Stomach (tissue), 19 donors: ENCODE measurements at regions of chr18 and their contacts with region 1.

Region 1: DNA sequence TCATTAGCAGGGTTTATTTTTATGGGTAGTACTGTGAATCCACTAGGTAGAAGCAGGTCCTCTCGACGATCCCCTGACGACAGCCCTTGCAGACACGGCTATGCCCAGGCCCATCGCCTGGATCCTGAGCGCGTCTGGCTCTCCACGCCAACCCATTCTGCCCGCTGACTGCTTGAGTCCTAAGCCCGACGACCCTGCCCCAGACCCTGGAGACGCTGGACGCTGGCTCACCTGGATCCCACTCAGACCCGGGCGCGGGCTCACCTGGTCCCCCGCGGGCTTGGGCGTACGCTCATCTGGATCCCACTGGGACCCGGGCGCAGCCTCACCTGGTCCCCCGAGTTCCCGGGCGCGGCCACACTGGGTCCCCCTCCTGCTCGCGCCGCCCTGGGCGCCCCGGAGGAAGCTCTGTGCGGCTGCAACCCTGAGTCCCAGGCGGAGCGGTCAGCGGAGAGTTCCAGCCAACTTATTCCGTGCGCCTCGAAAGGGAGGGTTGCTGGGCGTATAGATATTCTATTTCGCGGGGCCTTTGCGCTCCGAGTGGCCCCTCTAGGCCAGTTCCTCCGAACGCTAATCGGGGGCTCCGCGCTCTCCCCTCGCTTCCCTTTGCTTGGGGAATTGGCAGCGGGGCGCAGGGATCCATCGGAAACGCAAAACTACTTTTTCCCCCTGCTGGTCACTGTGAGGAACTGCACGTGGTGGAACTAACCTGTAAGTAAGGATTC is 22.4 kb upstream of the RMP24 start:
- DNase-seq: peak; percentile 55 to 87
- H3K4me3 ChIP-seq: peak overlapping the region; percentile 48 to 68 (median 56)
- H3K27ac ChIP-seq: peak overlapping the region in 1 of 5 donors; percentile 36
- H3K4me1 ChIP-seq: peaks cover 0 to 9% (median 8%) of the 10 kb centered on the region in 4 donors
- H3K27me3 ChIP-seq: peaks cover 0 to 8% (median 0%) of the 10 kb centered on the region in 3 donors
- CTCF ChIP-seq: peak in 6 of 7 experiments; percentile 68 to 97 (median 92)
- EP300 ChIP-seq: no peak
- POLR2A ChIP-seq: no peak

Region 2: GRCh38 chr18:35386600-35387351 is 563.3 kb before region 1 on chr18:
- intact Hi-C with region 1: loop called (anchors 10 kb)
- DNase-seq: peak; percentile 72 to 93
- H3K4me3 ChIP-seq: no peak overlapping the region
- H3K27ac ChIP-seq: no peak overlapping the region
- H3K4me1 ChIP-seq: no peaks in the 10 kb centered on the region
- H3K27me3 ChIP-seq: peaks cover 0 to 5% (median 0%) of the 10 kb centered on the region in 3 donors
- CTCF ChIP-seq: peak in 5 of 7 experiments; percentile 48 to 79 (median 77)
- EP300 ChIP-seq: no peak
- POLR2A ChIP-seq: no peak

Region 3: DNA sequence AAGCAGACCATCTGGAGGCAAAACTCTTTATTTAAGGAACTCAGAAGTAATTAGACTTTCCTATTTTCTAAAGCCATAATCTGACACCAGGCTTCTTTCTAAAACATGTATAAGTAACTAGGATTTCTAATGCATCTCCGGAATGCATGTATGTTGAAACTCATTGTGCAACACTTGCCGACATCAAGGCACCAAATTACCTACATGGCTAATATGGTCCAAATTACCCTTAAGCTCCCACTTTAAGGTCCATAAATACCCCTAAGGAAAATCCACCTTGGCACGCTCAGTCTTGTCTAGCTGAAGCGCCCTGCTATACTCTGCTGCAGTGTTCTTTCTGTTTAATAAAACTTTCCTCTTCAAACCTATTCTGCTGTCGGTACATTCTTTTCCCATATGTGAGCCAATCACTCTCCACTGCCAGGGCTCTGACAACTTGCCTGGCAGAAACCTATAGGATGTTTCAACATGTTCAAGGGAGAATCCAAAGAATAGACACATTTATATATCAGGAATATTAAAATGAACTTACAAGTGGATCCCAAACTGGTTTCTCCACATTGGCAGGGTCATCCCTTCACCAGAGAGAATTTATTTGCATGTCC is 196.7 kb before region 1 on chr18:
- intact Hi-C with region 1: loop called (anchors 5 kb)
- DNase-seq: no peak
- H3K4me3 ChIP-seq: no peak overlapping the region
- H3K27ac ChIP-seq: no peak overlapping the region
- H3K4me1 ChIP-seq: no peaks in the 10 kb centered on the region
- H3K27me3 ChIP-seq: peaks cover 0 to 13% (median 0%) of the 10 kb centered on the region in 3 donors
- CTCF ChIP-seq: no peak
- EP300 ChIP-seq: no peak
- POLR2A ChIP-seq: no peak

Region 4: DNA sequence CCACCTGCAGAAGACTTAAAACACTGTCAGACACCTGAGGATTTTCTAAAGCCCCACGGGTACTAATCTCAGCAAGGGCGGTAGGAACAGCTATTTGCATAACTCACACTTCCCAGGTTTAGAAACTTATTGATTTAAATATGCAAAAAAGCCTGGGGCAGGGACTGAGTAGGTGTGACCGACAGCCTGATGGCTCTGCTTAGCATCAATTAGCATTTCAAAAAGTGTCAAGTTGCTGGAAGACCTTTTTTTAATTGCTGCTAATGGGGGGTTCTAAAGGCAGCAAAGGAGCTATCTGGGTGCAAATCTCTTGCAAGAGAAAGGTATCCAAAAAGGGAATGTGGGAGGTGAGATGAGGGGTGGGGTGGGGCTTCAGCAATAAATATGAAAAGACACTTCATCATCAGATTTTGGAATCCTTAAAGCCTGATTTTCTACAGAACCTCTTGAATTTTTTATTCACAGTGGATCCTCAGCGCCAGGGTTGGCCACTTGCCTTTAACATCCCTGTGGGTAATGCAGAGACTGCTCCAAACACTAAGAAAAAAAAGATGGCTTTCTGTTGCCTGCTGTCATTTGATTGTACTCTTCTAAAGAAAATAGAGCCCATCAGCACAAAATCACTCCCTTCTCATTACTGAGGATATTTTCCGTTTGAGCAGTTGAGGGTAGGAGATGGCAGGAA is 98.6 kb before region 1 on chr18:
- intact Hi-C with region 1: no loop called
- DNase-seq: no peak
- H3K4me3 ChIP-seq: no peak overlapping the region
- H3K27ac ChIP-seq: no peak overlapping the region
- H3K4me1 ChIP-seq: no peaks in the 10 kb centered on the region
- H3K27me3 ChIP-seq: peaks cover 0 to 9% (median 0%) of the 10 kb centered on the region in 3 donors
- CTCF ChIP-seq: no peak
- EP300 ChIP-seq: no peak
- POLR2A ChIP-seq: no peak

Region 5: DNA sequence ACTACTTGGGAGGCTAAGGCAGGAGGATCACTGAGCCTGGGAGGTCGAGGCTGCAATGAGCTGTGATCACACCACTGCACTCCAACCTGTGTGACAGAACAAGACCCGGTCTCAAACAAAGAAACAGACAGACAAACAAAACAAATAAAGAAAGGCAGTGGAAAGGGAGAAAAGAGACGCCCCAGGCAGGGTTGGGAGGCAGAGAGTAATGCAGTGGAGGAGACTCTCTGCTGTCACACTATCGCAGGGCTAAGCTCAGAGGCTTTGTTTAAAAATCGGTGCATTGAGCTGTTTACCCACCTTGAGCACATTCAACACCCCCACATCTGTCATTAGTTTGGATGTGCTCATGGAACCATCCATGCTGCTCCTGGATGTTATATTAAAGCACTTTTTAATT is 61.7 kb before region 1 on chr18:
- intact Hi-C with region 1: no loop called
- DNase-seq: no peak
- H3K4me3 ChIP-seq: no peak overlapping the region
- H3K27ac ChIP-seq: no peak overlapping the region
- H3K4me1 ChIP-seq: no peaks in the 10 kb centered on the region
- H3K27me3 ChIP-seq: peaks cover 0 to 6% (median 0%) of the 10 kb centered on the region in 3 donors
- CTCF ChIP-seq: no peak
- EP300 ChIP-seq: no peak
- POLR2A ChIP-seq: no peak